ENCODE measurements at regions of chr12 and their contacts with region 1.

Region 1: DNA sequence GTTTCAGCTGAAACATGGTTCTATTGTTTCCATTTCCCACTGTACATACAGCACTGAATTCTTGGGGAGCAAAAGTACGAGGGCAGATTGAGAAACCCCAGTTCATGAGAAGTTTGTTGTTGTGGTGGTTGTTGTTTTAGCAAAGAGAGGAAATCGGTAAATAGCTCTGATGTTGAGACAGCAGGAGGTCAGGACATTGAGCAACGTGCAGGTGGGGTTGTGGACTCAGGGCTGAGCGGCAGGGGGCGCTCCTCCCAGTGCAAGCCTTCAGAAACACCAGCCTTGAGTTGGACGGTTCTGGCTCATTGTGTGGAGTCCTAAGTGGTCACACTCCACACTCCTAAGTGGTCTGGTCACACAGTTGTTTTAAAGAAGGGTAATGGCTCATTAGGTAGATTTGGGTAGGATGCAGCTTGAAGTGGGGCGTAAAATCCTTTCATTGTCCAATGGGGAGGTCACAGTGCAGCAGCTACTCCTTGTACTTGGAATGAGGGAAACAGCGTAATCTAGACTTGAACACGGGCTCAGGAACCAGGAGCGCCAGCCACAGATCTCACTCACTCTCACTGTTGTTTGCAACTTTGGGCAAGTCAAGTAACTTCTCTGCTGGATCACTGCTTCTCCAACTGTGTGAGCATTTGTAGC is 14.5 kb upstream of the PWP1 start:
- DNase-seq: no peak

Region 2: DNA sequence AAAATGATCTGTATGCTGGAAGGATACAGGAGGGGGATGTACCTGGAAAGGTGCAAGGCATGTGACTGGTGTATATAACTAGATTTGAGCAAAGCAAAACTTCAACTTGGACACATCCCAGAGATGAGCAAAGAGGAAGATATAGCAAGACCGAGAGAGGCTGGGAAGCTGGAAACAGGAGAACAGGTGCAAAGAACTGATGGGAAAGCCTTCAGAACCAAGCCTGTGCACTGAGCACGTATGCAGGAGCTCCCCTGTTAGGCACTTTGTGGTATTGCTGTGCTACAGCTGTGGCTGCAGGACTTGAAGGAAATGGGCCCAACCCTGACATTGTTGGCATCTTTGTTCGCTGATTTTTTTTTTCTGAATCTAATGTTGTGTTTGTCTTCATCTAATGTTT is 106.2 kb before region 1 on chr12:
- in situ Hi-C with region 1: no loop called
- DNase-seq: peak; percentile 12

Region 3: GRCh38 chr12:107884769-107885694 is 213.9 kb after region 1 on chr12:
- in situ Hi-C with region 1: loop called (anchors 25 kb)
- DNase-seq: peak; percentile 58

Measured in G401 (cell line).